Gastrocnemius medialis (tissue), 4 donors: ENCODE measurements at regions of chr19 and their contacts with region 1.

Region 1: DNA sequence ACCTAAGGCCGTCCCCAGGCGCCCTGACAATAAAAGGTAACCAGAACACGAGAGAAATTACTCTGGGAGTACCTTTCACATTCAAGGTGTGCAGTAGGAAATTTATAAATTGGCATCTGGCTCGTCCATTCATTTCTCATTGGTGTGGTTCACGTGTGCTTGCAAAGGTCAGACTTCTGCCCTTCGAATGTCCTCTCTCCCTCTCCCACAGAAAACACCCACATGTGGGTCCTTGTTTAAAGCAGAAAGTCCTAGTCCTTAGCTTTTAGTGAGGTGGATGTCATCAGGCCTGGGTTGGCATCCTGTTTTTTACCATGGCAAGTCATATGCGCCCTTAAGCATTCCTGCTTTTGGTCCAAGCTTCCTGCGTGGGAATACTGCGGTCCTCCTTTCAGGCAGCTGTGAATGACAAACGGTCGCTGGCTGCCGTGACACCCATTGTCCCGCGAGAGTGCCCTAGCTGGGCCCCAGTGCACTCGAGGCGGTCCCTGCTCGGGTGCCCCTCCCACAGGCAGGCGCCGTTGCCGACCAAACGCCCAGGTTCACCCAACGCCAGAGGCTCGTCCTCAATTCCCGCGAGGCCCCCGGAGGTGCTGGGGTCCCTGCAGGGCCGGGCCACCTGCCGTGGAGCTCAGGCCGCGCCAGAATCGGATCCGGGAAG is at the start of gene NUDT19:
- DNase-seq: peak; percentile 81 to 86
- ATAC-seq: peak; percentile 84 to 87
- H3K4me3 ChIP-seq: peak within 1 kb of the TSS; percentile 64 to 78 (median 66)
- H3K27ac ChIP-seq: peak within 1 kb of the TSS; percentile 69 to 92 (median 83)
- H3K4me1 ChIP-seq: peaks cover 46 to 48% of the 10 kb centered on the region in 2 donors
- H3K27me3 ChIP-seq: no peaks in the 10 kb centered on the region
- CTCF ChIP-seq: no peak
- POLR2A ChIP-seq: peak; percentile 83 to 85
- total RNA-seq, gene NUDT19: 28.8 to 34.8 (median 29.2) TPM

Region 2: GRCh38 chr19:32580901-32581703 is 110.3 kb before region 1 on chr19 and contains the start of gene PDCD5:
- in situ Hi-C with region 1: loop called in 1 of 4 experiments (anchors 10 kb)
- intact Hi-C with region 1: loop called (anchors 5 kb)
- DNase-seq: peak; percentile 92 to 94
- ATAC-seq: peak; percentile 93 to 95
- H3K4me3 ChIP-seq: peak within 1 kb of the TSS; percentile 70 to 94 (median 78)
- H3K27ac ChIP-seq: peak within 1 kb of the TSS; percentile 79 to 92 (median 86)
- H3K4me1 ChIP-seq: peaks cover 7 to 11% of the 10 kb centered on the region in 2 donors
- H3K27me3 ChIP-seq: no peaks in the 10 kb centered on the region
- CTCF ChIP-seq: no peak
- POLR2A ChIP-seq: peak; percentile 83 to 84
- total RNA-seq, gene PDCD5: 121 to 201 (median 170) TPM

Region 3: GRCh38 chr19:32599736-32600157 is 91.7 kb before region 1 on chr19:
- in situ Hi-C with region 1: no loop called
- intact Hi-C with region 1: loop called (anchors 5 kb)
- DNase-seq: no peak
- ATAC-seq: peak in 1 of 2 donors; percentile 56
- H3K4me3 ChIP-seq: no peak overlapping the region
- H3K27ac ChIP-seq: no peak overlapping the region
- H3K4me1 ChIP-seq: no peaks in the 10 kb centered on the region
- H3K27me3 ChIP-seq: no peaks in the 10 kb centered on the region
- CTCF ChIP-seq: peak; percentile 70 to 85 (median 74)
- POLR2A ChIP-seq: no peak

Region 4: GRCh38 chr19:32652894-32653602 is 38.4 kb before region 1 on chr19:
- in situ Hi-C with region 1: no loop called
- intact Hi-C with region 1: loop called (anchors 5 kb)
- DNase-seq: peak in 1 of 2 donors; percentile 47
- ATAC-seq: no peak
- H3K4me3 ChIP-seq: no peak overlapping the region
- H3K27ac ChIP-seq: peak overlapping the region; percentile 88 to 94 (median 94)
- H3K4me1 ChIP-seq: peaks cover 40 to 44% of the 10 kb centered on the region in 2 donors
- H3K27me3 ChIP-seq: no peaks in the 10 kb centered on the region
- CTCF ChIP-seq: no peak
- POLR2A ChIP-seq: no peak

Region 5: GRCh38 chr19:32674959-32675719 is 16.3 kb before region 1 on chr19 and contains the start of gene ANKRD27:
- in situ Hi-C with region 1: no loop called
- intact Hi-C with region 1: loop called (anchors 1 kb)
- DNase-seq: peak; percentile 97 to 99
- ATAC-seq: peak; percentile 85 to 87
- H3K4me3 ChIP-seq: peak within 1 kb of the TSS; percentile 69 to 95 (median 82)
- H3K27ac ChIP-seq: peak within 1 kb of the TSS; percentile 88 to 97 (median 94)
- H3K4me1 ChIP-seq: peaks cover 31 to 46% of the 10 kb centered on the region in 2 donors
- H3K27me3 ChIP-seq: peaks cover 0 to 2% (median 0%) of the 10 kb centered on the region in 3 donors
- CTCF ChIP-seq: no peak
- POLR2A ChIP-seq: peak; percentile 90 to 95
- total RNA-seq, gene ANKRD27: 36.4 to 78.3 (median 53.5) TPM

Region 6: GRCh38 chr19:32708457-32708856 is 17.0 kb after region 1 on chr19:
- in situ Hi-C with region 1: no loop called
- intact Hi-C with region 1: no loop called
- DNase-seq: no peak
- ATAC-seq: no peak
- H3K4me3 ChIP-seq: no peak overlapping the region
- H3K27ac ChIP-seq: no peak overlapping the region
- H3K4me1 ChIP-seq: no peaks in the 10 kb centered on the region
- H3K27me3 ChIP-seq: no peaks in the 10 kb centered on the region
- CTCF ChIP-seq: no peak
- POLR2A ChIP-seq: no peak